MCF 10A (cell line): ENCODE measurements at regions of chr5 and their contacts with region 1.

Region 1: GRCh38 chr5:10452768-10453331 is 11.2 kb downstream of the ROPN1L start:
- DNase-seq: peak; percentile 77
- H3K4me3 Mint-ChIP-seq: no peak overlapping the region
- H3K27ac Mint-ChIP-seq: peak overlapping the region; percentile 54
- H3K4me1 Mint-ChIP-seq: peaks cover 43% of the 10 kb centered on the region
- H3K27me3 Mint-ChIP-seq: no peaks in the 10 kb centered on the region
- CTCF ChIP-seq: peak; percentile 65

Region 2: GRCh38 chr5:10441083-10441991 is 11.5 kb before region 1 on chr5 and contains the start of gene ROPN1L:
- CTCF ChIA-PET with region 1: interaction called, 15 read pairs
- POLR2A ChIA-PET with region 1: interaction called, 5 read pairs
- intact Hi-C with region 1: no loop called
- DNase-seq: peak; percentile 87
- H3K4me3 Mint-ChIP-seq: peak within 1 kb of the TSS; percentile 74
- H3K27ac Mint-ChIP-seq: no peak within 1 kb of the TSS
- H3K4me1 Mint-ChIP-seq: no peaks in the 10 kb centered on the region
- H3K27me3 Mint-ChIP-seq: no peaks in the 10 kb centered on the region
- CTCF ChIP-seq: no peak
- total RNA-seq, gene ROPN1L: 0.82 TPM in 1 of 2 replicates, not detected in the other

Region 3: DNA sequence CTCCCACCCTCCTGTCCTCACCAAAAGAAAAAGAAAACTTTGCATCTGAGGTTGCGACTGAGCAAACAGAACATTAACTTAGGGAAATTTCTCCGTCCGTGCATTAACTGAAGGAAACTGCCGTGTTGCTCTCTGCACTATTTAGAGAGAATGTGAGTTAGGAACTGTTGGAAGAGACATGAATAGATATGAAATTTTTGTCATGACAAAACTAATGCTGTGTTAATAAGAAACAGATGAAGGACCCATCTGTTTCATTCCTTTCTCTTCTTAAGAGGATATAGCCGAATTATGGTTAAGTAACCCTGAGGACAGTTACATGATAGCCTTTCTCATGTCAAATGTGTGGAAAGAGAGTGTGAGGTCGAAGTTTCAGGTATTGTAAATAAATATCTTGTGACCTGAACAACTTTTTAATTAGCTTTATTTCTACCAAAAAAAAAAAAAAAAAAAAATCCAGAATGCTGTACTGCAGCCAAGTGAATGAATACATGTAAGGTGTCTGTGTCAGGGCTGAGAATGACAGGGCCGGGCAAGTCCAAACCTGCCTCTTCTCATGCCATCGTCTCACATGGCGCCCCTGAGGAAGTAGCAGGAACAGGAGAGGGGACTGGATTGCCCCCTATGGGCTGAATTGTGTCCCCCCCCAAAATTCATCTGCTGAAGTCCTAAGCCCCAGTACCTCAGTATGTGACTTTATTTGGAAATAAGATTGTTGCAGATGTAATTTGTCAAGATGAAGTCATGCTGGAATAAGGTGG is 75.4 kb after region 1 on chr5:
- CTCF ChIA-PET with region 1: interaction called, 19 read pairs
- POLR2A ChIA-PET with region 1: interaction called, 5 read pairs
- intact Hi-C with region 1: loop called (anchors 1 kb)
- DNase-seq: peak; percentile 77
- H3K4me3 Mint-ChIP-seq: no peak overlapping the region
- H3K27ac Mint-ChIP-seq: peak overlapping the region; percentile 71
- H3K4me1 Mint-ChIP-seq: peaks cover 24% of the 10 kb centered on the region
- H3K27me3 Mint-ChIP-seq: no peaks in the 10 kb centered on the region
- CTCF ChIP-seq: peak; percentile 13

Region 4: GRCh38 chr5:10538103-10538788 is 85.4 kb after region 1 on chr5:
- CTCF ChIA-PET with region 1: no interaction called
- POLR2A ChIA-PET with region 1: no interaction called
- intact Hi-C with region 1: no loop called
- DNase-seq: no peak
- H3K4me3 Mint-ChIP-seq: no peak overlapping the region
- H3K27ac Mint-ChIP-seq: no peak overlapping the region
- H3K4me1 Mint-ChIP-seq: peaks cover 6% of the 10 kb centered on the region
- H3K27me3 Mint-ChIP-seq: no peaks in the 10 kb centered on the region
- CTCF ChIP-seq: no peak

Region 5: GRCh38 chr5:10607666-10608073 is 154.8 kb after region 1 on chr5:
- CTCF ChIA-PET with region 1: interaction called, 17 read pairs
- POLR2A ChIA-PET with region 1: interaction called, 9 read pairs
- intact Hi-C with region 1: no loop called
- DNase-seq: peak; percentile 54
- H3K4me3 Mint-ChIP-seq: no peak overlapping the region
- H3K27ac Mint-ChIP-seq: no peak overlapping the region
- H3K4me1 Mint-ChIP-seq: peaks cover 7% of the 10 kb centered on the region
- H3K27me3 Mint-ChIP-seq: no peaks in the 10 kb centered on the region
- CTCF ChIP-seq: no peak

Region 6: GRCh38 chr5:10695055-10695649 is 242.3 kb after region 1 on chr5:
- CTCF ChIA-PET with region 1: interaction called, 9 read pairs
- POLR2A ChIA-PET with region 1: no interaction called
- intact Hi-C with region 1: loop called (anchors 2 kb)
- DNase-seq: peak; percentile 79
- H3K4me3 Mint-ChIP-seq: peak overlapping the region; percentile 6
- H3K27ac Mint-ChIP-seq: no peak overlapping the region
- H3K4me1 Mint-ChIP-seq: peaks cover 11% of the 10 kb centered on the region
- H3K27me3 Mint-ChIP-seq: no peaks in the 10 kb centered on the region
- CTCF ChIP-seq: peak; percentile 69

Region 7: DNA sequence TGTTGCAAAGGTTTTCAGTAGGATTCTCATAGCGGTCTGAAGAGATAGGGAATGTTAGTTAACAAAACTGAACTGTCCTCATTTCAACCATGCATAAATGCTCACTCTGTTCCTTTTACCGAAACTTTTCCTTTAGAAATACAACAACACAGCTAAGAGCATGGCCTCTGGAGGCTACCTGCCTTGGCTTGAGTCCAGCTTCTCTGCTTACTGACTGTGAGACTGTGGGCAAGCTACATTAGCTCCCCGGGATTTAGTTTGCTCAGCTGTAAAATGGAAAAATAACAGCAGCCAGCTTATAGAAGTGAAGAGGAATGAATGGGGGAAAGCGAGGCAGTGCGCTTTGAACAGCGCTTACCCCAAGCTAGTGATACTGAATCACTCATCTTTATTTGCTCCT is 816.0 kb after region 1 on chr5:
- CTCF ChIA-PET with region 1: interaction called, 3 read pairs
- POLR2A ChIA-PET with region 1: no interaction called
- intact Hi-C with region 1: loop called (anchors 5 kb)
- DNase-seq: no peak
- H3K4me3 Mint-ChIP-seq: no peak overlapping the region
- H3K27ac Mint-ChIP-seq: no peak overlapping the region
- H3K4me1 Mint-ChIP-seq: no peaks in the 10 kb centered on the region
- H3K27me3 Mint-ChIP-seq: peaks cover 20% of the 10 kb centered on the region
- CTCF ChIP-seq: no peak

Region 8: DNA sequence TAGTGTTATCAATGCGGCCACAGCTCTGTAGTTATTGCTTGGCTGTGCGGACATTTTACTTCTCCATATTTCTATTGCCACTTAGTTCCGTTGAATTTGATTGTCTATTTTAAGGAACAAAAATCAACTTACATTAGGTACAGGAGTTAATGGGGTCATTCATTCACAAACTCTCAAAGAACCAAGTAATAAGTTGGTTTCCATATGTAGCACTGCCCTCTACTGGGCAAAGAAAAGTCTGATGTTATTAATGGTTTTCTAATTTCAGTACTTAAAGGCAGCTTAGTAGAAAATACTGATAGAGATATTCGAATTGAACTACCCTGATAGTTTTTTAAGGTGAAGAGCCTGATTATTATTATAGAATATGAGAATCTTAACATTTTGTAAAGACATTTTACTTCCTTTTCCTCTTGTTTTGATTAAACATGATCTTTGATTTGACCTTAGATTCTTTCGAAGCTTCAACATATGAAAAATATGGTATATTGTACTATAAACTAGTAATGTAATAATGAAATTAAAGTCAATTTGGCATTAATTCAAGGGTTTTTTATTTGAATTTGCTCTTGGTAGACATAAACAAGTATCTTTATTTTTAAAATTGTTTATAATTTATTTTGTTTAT is 1570.9 kb after region 1 on chr5:
- CTCF ChIA-PET with region 1: no interaction called
- POLR2A ChIA-PET with region 1: no interaction called
- intact Hi-C with region 1: loop called (anchors 10 kb)
- DNase-seq: peak; percentile 60
- H3K4me3 Mint-ChIP-seq: no peak overlapping the region
- H3K27ac Mint-ChIP-seq: no peak overlapping the region
- H3K4me1 Mint-ChIP-seq: no peaks in the 10 kb centered on the region
- H3K27me3 Mint-ChIP-seq: no peaks in the 10 kb centered on the region
- CTCF ChIP-seq: peak; percentile 44